Posterior cingulate gyrus (tissue), 11 donors: ENCODE measurements at regions of chr11 and their contacts with region 1.

Region 1: GRCh38 chr11:118592616-118593367 is 14.6 kb upstream of the PHLDB1 start:
- DNase-seq: no peak

Region 2: GRCh38 chr11:118610804-118611795 is 18.3 kb after region 1 on chr11:
- intact Hi-C with region 1: loop called (anchors 2 kb)
- DNase-seq: peak in 9 of 10 donors; percentile 70 to 95 (median 78)

Region 3: GRCh38 chr11:118659314-118659952 is 66.6 kb after region 1 on chr11:
- intact Hi-C with region 1: loop called (anchors 2 kb)
- DNase-seq: peak; percentile 76 to 98 (median 92)